Activated naive CD4-positive, alpha-beta T cell treated with anti-CD3 and anti-CD28 coated beads, Interleukin-2, amount 10 ng/mL, durations not matched to agents 7 days and 5 days (primary cell): ENCODE measurements at regions of chr2 and their contacts with region 1.

Region 1: DNA sequence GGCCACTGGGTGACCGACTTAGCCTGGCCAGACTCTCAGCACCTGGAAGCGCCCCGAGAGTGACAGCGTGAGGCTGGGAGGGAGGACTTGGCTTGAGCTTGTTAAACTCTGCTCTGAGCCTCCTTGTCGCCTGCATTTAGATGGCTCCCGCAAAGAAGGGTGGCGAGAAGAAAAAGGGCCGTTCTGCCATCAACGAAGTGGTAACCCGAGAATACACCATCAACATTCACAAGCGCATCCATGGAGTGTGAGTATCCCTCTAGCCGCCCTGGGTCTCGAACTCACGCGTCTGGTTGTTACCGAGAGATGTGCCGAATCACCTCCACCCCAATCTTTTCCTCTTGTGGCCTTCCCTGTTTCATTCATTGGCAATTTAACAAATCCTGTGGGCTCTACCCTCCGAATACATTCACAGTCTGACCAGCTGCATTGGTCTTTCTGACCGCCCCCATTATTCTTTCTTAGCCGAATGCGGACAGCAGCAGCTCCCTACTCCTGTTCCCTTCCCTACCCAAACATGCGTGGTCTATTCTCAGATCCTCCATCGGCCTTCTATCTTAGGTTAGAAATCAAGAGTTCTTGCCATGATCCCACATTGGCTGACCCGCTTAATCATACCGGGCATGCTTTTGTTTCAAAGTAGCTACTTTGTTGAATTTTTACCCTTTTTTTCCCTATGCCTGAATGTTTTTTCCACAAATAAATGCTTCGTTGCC is 631 bp downstream of the RPL31 start:
- DNase-seq: no peak
- H3K4me3 Mint-ChIP-seq: peak overlapping the region; percentile 96
- H3K27ac Mint-ChIP-seq: peak overlapping the region; percentile 92
- H3K4me1 Mint-ChIP-seq: peaks cover 51% of the 10 kb centered on the region
- H3K27me3 Mint-ChIP-seq: peaks cover 15% of the 10 kb centered on the region

Region 2: DNA sequence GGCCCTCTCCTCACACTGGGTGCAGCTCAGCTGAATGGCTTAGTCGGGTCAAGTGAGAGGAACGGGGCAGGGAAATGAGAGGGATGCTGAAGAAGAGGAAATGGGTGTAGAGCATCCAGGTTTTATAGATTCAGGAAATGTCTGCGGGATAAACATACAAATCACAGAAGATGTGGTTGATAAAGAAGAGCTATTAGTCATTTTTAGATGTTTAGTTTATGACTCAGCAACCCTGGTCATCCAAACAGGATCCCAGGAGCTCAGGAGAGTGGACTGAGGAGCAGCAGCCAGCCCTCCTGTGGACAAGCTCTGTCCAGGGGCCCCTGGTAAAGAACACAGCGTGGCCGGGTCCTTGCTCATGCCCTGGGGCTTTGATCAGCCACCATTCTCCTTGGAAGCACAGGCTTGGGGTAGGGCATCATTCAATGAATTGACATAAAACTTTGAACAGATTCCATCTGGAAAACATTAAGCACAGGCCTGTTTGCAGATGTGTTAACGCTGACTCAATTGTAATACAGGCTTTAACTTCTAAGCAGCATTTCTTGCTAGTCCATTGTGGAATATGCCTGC is 99.8 kb before region 1 on chr2:
- CTCF ChIA-PET with region 1: no interaction called
- DNase-seq: no peak
- H3K4me3 Mint-ChIP-seq: no peak overlapping the region
- H3K27ac Mint-ChIP-seq: no peak overlapping the region
- H3K4me1 Mint-ChIP-seq: peaks cover 10% of the 10 kb centered on the region
- H3K27me3 Mint-ChIP-seq: peaks cover 10% of the 10 kb centered on the region

Region 3: DNA sequence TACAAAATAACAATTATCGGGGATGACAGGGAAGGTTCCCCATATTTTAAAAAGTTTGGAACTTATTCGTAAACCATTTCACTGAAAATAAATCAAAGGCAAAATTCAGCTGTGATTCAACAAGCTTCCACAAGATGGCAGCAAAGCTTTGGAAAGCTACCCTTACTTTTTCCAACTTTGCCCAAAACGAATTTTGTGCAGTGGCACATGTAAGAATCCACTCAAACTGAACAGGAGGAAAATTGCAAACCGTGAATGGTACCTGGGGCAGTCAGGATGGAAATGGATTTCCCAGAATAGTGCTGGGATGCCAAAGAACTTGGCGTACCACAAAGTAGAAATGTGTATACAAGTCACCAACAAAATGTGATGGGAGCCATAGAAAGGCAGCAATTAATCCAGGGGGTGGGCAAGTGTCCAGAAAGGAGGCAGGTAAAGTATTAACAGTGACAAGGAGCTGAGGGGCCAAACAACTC is 10.0 kb after region 1 on chr2:
- CTCF ChIA-PET with region 1: interaction called, 13 read pairs
- DNase-seq: peak; percentile 53
- H3K4me3 Mint-ChIP-seq: no peak overlapping the region
- H3K27ac Mint-ChIP-seq: no peak overlapping the region
- H3K4me1 Mint-ChIP-seq: peaks cover 4% of the 10 kb centered on the region
- H3K27me3 Mint-ChIP-seq: no peaks in the 10 kb centered on the region

Region 4: DNA sequence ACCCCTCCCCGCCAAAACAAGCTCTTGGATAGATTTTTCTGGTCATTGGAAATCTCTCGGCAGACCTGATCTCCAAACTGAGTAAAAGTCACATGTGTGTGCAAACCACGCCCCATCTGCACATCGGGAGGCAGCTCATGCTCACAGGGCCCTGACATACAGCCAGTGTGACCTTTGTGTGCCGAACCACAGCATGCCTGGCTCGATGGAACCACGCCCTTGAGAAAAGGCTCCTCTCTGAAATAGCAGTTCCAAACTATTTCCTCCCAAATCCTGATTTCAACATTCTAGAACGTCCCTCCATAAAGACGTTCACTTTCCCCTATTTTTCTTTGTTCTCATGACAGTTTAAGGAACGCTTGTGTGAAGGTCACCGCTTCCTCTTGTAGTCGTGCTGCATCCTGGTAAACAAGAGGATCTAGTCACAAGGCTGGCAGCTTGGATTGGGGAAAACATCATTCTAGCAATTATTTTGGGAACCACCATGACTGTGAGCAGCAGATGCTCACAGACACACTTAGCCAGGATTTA is 635.5 kb after region 1 on chr2:
- CTCF ChIA-PET with region 1: no interaction called
- DNase-seq: no peak
- H3K4me3 Mint-ChIP-seq: no peak overlapping the region
- H3K27ac Mint-ChIP-seq: no peak overlapping the region
- H3K4me1 Mint-ChIP-seq: no peaks in the 10 kb centered on the region
- H3K27me3 Mint-ChIP-seq: peaks cover 6% of the 10 kb centered on the region